AG04450 (cell line): ENCODE measurements at regions of chr7 and their contacts with region 1.

Region 1: DNA sequence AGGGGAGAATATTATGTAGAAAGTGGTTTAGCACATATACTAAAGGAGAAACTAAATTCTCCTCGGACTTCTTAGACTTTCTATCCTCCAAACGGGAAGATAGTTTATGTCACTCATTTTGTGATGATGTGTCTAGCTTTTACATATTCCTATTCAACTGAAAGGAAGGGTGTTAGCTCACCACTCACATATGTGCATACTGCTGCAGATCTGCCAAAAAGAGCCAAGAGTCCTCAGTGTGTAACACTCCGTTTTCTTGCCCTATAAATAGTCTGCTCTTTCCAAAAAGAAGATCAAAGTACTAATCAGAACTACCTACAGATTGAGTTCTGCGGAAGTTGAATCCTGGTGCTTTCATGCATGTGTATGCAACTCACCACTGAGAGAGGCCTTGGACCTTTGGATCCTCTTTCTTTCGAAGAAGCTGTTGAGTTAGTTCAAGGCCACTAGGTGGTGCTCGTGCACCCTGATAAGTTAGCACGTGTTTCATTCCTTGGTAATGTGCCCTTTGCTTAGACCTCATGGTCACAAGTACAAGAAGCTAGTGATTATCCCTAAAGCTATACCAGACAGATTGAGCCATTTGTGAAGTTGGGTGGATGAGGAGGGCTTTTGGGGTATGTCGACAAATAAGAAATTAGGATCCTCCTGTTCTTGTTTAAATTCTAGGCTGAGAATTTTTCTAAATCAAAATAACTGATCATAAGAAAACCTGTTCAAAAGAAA is 14.1 kb downstream of the YAE1 start:
- DNase-seq: peak; percentile 91
- H3K4me3 ChIP-seq: no peak overlapping the region
- H3K27ac ChIP-seq: no peak overlapping the region
- H3K27me3 ChIP-seq: no peaks in the 10 kb centered on the region
- CTCF ChIP-seq: peak; percentile 85

Region 2: GRCh38 chr7:39566023-39566921 is 14.0 kb before region 1 on chr7 and contains the start of gene YAE1:
- CTCF ChIA-PET with region 1: interaction called, 18 read pairs
- POLR2A ChIA-PET with region 1: no interaction called
- DNase-seq: peak; percentile 23
- H3K4me3 ChIP-seq: peak within 1 kb of the TSS; percentile 94
- H3K27ac ChIP-seq: peak within 1 kb of the TSS; percentile 66
- H3K27me3 ChIP-seq: no peaks in the 10 kb centered on the region
- CTCF ChIP-seq: no peak
- polyA plus RNA-seq, gene YAE1: 38.5 and 49.0 TPM in 2 replicates

Region 3: DNA sequence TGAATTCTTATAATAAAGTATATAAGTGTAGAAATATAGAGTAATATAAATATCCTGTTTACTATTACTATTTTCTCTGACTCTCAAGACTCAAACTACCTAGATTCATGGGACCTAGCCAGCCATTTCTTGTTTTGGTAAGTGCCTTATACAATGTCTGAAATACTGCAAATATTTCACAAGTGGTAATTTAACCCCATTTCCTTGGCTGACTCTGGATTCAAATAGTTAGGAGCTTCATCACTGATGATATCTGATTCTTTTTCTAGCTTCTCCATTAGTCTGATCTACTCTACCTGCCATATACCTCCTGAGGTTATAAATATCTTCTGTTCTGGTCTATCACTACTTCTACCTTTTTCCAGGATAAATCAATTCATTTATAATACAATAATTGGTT is 36.7 kb after region 1 on chr7:
- CTCF ChIA-PET with region 1: interaction called, 24 read pairs
- POLR2A ChIA-PET with region 1: no interaction called
- DNase-seq: no peak
- H3K4me3 ChIP-seq: no peak overlapping the region
- H3K27ac ChIP-seq: no peak overlapping the region
- H3K27me3 ChIP-seq: no peaks in the 10 kb centered on the region
- CTCF ChIP-seq: no peak

Region 4: GRCh38 chr7:39709768-39710311 is 129.5 kb after region 1 on chr7:
- CTCF ChIA-PET with region 1: interaction called, 27 read pairs
- POLR2A ChIA-PET with region 1: interaction called, 5 read pairs
- DNase-seq: peak; percentile 85
- H3K4me3 ChIP-seq: no peak overlapping the region
- H3K27ac ChIP-seq: no peak overlapping the region
- H3K27me3 ChIP-seq: no peaks in the 10 kb centered on the region
- CTCF ChIP-seq: no peak

Region 5: DNA sequence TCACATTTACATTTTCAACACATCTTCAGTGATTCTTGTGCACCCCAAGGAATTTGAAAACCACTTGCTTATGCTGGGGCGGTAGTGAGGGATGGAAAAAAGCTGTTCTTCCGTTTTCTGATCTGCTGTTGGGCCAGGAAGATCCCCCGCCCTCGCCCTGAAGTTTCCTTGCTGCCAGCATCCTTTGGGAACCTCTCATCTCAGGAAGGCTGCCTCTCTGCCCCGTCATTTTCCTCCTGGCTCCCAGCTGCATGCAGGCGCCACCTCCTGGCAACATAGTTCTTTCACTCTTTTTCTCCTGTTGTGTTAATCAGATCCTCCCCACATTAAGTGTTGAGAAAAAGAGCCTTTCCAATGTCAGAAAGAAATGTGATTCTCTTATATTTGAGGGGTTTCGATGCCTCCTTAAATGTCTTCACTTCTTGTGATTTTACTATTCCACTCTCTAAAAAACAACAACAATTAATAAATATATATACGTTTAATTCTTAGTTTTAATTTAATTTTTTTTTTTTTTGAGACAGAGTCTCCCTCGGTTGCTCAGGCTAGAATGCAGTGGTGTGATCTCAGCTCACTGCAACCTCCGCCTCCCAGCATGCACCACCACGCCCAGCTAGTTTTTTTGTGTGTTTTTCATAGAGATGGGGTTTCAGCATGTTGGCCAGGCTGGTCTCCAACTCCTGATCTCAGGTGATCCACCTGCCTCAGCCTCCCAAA is 165.9 kb after region 1 on chr7:
- CTCF ChIA-PET with region 1: interaction called, 409 read pairs
- POLR2A ChIA-PET with region 1: interaction called, 6 read pairs
- DNase-seq: peak; percentile 67
- H3K4me3 ChIP-seq: no peak overlapping the region
- H3K27ac ChIP-seq: no peak overlapping the region
- H3K27me3 ChIP-seq: no peaks in the 10 kb centered on the region
- CTCF ChIP-seq: peak; percentile 87

Region 6: DNA sequence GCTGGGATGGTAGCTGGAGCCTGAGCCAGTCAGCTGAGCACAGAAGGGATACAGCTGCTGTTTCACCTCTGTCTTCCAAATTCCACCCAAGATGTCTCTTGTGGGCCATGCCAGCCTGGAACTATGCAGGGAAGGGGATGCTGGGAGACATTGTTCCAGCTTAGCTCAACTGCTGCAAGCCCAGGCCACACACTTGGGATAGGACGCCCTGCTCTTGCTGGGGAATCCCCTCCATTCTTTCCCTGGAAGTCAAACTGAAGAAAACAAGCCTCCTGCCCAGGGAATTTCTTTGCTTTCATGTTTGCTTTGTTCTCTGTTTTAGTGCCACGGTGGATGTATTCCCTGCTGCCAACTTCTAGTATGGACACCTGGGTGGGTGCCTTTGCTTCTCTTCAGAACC is 314.6 kb after region 1 on chr7:
- CTCF ChIA-PET with region 1: interaction called, 25 read pairs
- POLR2A ChIA-PET with region 1: no interaction called
- DNase-seq: no peak
- H3K4me3 ChIP-seq: no peak overlapping the region
- H3K27ac ChIP-seq: no peak overlapping the region
- H3K27me3 ChIP-seq: peaks cover 54% of the 10 kb centered on the region
- CTCF ChIP-seq: no peak